SK-N-SH (cell line): ENCODE measurements at regions of chr17 and their contacts with region 1.

Region 1: DNA sequence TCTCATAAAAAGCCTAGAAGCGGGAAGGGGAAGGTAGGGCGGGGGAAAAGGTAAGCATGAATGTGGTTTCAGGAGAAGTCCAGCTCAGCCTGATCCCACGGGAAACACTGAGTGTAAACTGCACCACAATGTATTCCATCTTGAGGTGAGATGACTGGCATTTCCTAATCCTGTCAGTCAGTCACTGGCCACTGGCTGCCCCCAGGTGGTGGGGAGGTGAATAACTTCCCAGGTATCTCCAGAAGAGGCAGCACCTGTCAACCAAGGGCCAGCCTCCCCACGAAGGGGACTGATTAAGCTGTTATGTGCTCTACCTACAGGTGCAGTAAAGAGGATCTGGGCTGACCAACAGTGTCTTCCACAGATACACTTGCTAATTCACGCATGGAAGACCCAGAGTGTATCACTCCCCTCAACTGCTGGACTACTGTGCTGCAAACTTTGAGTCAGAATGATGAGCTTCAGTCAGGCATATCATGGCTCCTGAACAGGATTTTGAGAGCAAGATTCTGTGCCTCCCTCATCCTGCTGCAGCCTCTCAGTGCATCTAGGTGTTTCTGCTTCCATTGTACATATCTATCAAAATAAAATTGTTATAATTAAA is 108.5 kb upstream of the CCL2 start:
- DNase-seq: peak; percentile 64
- H3K4me3 ChIP-seq: no peak overlapping the region; a peak in 1 of 4 replicates
- H3K27ac ChIP-seq: no peak overlapping the region
- H3K4me1 ChIP-seq: no peaks in the 10 kb centered on the region; a peak in 1 of 4 replicates
- H3K27me3 ChIP-seq: no peaks in the 10 kb centered on the region
- CTCF ChIP-seq: peak; percentile 46
- EP300 ChIP-seq: no peak
- RAD21 ChIP-seq: peak; percentile 85

Region 2: DNA sequence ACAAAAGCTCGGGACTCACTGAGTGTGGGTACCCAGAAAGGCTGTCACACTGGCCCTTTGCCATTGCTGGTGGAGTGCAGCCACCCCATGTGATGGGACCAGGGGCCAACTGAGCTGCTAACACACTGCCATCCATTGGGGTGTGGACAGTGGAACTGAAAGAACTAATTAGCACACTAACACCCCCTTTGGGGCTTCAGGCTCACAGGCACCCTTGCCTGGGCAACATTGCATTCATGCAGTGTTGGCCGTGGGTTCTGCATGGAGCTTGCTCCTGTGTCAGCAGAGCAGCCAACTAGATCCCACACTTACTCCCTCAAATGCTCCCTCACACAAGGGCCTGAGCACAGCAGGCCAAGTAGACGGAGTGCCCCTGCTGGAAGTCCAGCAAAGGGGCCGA is 377.5 kb before region 1 on chr17:
- CTCF ChIA-PET with region 1: interaction called, 162 read pairs
- POLR2A ChIA-PET with region 1: no interaction called
- DNase-seq: no peak
- H3K4me3 ChIP-seq: no peak overlapping the region
- H3K27ac ChIP-seq: no peak overlapping the region
- H3K4me1 ChIP-seq: peaks cover 0 to 10% of the 10 kb centered on the region in 2 experiments; a peak in 2 of 4 replicates
- H3K27me3 ChIP-seq: no peaks in the 10 kb centered on the region
- CTCF ChIP-seq: no peak
- EP300 ChIP-seq: no peak
- RAD21 ChIP-seq: no peak

Region 3: DNA sequence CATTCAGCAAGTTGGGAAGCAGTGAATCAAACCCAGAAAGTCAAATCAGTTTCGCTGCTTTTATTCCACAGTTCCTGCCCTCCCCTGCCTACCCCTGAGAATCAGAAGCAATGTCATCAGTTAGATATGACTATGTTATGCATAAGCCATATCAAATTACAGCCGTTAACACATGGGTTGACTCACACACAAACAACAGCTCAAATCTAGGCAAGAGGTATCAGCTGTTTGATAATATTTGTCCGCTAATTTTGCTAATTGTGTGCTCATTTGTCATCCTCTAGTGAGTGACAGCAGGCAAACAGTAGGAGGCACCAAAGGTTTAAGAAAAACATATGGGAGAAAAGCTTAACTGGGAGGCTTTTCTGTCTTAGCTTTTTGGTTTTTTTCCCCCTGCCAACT is 218.8 kb before region 1 on chr17:
- CTCF ChIA-PET with region 1: interaction called, 66 read pairs
- POLR2A ChIA-PET with region 1: no interaction called
- DNase-seq: peak; percentile 39
- H3K4me3 ChIP-seq: no peak overlapping the region
- H3K27ac ChIP-seq: no peak overlapping the region
- H3K4me1 ChIP-seq: peaks cover 0 to 3% of the 10 kb centered on the region in 2 experiments; a peak in 1 of 4 replicates
- H3K27me3 ChIP-seq: no peaks in the 10 kb centered on the region
- CTCF ChIP-seq: peak; percentile 22
- EP300 ChIP-seq: no peak
- RAD21 ChIP-seq: peak; percentile 70

Region 4: DNA sequence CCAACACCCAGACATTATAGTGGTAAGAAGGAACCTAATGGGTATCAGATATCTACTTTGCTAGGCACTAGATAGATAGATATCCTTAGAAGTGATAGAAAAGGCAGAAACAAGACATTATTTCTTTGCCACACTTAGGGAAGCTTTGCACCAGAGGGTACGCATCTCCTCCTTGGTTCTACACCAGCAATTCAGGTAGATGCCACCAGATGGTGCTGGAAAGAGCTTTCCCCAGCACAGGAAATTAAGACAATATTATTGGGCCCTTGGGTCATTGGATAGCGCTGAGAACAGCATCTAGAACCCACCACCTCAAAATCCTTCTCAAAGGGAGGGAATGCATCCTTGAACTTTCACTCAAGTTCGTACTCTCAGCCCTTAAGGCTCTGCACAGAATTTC is 65.3 kb before region 1 on chr17:
- CTCF ChIA-PET with region 1: interaction called, 12 read pairs
- POLR2A ChIA-PET with region 1: no interaction called
- DNase-seq: no peak
- H3K4me3 ChIP-seq: no peak overlapping the region
- H3K27ac ChIP-seq: no peak overlapping the region
- H3K4me1 ChIP-seq: peaks cover 0 to 7% of the 10 kb centered on the region in 2 experiments; a peak in 1 of 4 replicates
- H3K27me3 ChIP-seq: no peaks in the 10 kb centered on the region
- CTCF ChIP-seq: peak; percentile 26
- EP300 ChIP-seq: no peak
- RAD21 ChIP-seq: peak; percentile 20; the same call in 1 of the 2 replicates

Region 5: GRCh38 chr17:34133350-34133749 is 13.2 kb before region 1 on chr17:
- CTCF ChIA-PET with region 1: interaction called, 32 read pairs
- POLR2A ChIA-PET with region 1: no interaction called
- DNase-seq: no peak
- H3K4me3 ChIP-seq: no peak overlapping the region
- H3K27ac ChIP-seq: no peak overlapping the region
- H3K4me1 ChIP-seq: no peaks in the 10 kb centered on the region; a peak in 1 of 4 replicates
- H3K27me3 ChIP-seq: no peaks in the 10 kb centered on the region
- CTCF ChIP-seq: no peak
- EP300 ChIP-seq: no peak
- RAD21 ChIP-seq: no peak

Region 6: DNA sequence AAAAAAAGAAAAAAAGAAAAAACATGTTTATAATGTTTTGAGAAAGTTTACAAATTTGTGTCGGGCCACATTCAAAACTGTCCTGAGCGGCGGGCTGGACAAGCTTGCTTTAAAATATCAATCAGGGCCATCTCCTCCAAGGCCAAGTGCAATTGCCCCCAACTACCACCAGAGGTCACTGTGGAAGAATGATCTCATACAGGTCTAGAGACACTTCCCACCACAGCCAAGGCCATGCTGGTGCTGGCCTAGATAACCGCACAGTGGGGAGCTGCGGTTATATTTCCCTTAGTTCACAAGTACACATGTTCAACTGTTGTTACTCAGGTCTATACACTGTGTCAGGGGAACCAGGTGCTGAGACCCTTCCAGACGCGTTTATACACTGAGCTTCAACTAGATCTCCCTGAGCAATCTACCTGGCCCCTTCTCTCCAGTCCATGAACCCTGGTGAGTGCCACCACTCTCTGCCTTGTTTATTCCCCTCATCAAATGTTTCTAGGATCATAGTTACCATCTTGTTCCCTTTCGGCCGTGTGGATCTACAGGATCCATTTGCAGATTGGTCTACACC is 24.8 kb after region 1 on chr17:
- CTCF ChIA-PET with region 1: interaction called, 14 read pairs
- POLR2A ChIA-PET with region 1: no interaction called
- DNase-seq: peak; percentile 62
- H3K4me3 ChIP-seq: no peak overlapping the region; a peak in 1 of 4 replicates
- H3K27ac ChIP-seq: no peak overlapping the region
- H3K4me1 ChIP-seq: no peaks in the 10 kb centered on the region; a peak in 1 of 4 replicates
- H3K27me3 ChIP-seq: no peaks in the 10 kb centered on the region
- CTCF ChIP-seq: peak; percentile 87
- EP300 ChIP-seq: no peak
- RAD21 ChIP-seq: peak; percentile 56